ENCODE measurements at regions of chr19 and their contacts with region 1.

Region 1: DNA sequence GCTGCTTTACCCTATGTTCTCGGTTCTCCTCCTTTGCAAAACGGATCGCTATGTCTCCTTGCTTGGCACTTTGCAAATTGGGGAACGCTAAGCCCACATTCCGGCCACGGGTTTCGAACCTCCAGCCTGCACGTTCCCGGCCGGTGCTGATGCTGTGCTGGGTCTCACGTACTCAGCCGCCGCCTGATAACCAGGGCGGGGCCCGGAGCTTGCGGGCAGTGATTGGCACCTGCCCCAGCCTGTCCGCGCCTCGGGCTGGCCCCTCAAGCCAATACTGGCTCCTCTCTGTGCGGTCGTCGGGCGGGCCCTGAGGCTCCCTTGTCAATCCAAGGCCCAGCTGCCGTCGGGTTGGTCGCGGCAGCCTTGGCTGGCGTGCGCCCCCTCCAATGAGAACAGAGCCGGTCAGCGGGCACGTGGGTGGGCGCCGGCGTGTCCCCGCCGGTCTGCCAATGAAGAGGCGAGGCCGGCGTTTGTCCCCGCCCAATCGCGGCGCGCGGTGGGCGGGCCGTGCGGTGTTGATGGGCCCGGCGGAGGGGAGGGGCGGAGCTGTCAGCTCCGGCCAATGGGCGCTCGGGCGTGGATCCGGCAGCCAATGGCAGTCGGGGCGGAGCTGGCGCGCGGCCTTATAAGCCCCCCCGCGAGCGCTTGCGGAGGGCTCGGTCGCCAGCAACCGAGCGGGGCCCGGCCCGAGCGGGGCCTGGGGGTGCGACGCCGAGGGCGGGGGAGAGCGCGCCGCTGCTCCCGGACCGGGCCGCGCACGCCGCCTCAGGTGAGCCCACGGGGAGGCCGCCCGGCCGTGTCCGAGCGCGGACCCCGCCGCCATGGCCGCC is at the start of gene KDM4B:
- DNase-seq: peak; percentile 98
- H3K4me3 Mint-ChIP-seq: peak within 1 kb of the TSS; percentile 88
- H3K27ac Mint-ChIP-seq: peak within 1 kb of the TSS; percentile 75
- H3K4me1 Mint-ChIP-seq: peaks cover 30% of the 10 kb centered on the region
- H3K27me3 Mint-ChIP-seq: no peaks in the 10 kb centered on the region
- total RNA-seq, gene KDM4B: 10.5 to 12.7 TPM

Region 2: GRCh38 chr19:4576016-4576933 is 392.4 kb before region 1 on chr19:
- CTCF ChIA-PET with region 1: no interaction called
- intact Hi-C with region 1: no loop called
- DNase-seq: peak; percentile 87
- H3K4me3 Mint-ChIP-seq: no peak overlapping the region
- H3K27ac Mint-ChIP-seq: no peak overlapping the region
- H3K4me1 Mint-ChIP-seq: peaks cover 11% of the 10 kb centered on the region
- H3K27me3 Mint-ChIP-seq: peaks cover 40% of the 10 kb centered on the region

Region 3: DNA sequence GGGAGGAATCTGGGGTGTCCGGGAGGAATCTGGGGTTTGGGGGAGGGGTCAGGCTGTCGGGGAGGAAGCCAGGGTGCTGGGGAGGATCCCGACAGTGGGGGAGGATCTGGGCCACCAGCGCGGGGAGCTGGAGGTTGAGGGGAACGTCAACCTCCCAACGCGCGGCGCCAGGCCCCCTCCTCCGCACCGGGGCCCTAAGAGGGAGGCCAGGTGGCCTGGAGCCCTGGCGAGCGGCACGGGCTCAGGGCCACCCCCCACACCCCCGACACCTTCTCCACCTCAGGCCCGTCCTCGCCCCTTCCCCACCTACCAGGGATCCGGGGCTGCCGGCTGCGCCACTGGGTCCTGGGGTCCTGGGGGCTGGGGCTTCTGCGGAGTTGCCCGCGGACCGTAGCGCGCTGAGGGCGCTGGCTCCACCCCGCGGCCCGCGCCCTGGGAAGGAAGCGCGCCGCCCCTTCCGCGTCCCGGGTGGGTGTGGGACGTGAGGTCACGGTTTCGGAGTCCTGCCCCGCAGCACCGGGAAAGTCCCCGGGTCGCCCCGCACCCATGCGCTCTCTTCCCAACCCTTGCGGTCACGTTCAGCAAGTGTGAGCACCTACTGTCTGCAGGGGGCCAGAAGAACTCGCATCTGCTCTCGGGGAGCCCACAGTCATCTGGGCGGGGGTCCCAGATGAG is 137.2 kb before region 1 on chr19 and contains the start of gene TICAM1:
- CTCF ChIA-PET with region 1: no interaction called
- intact Hi-C with region 1: no loop called
- DNase-seq: peak; percentile 86
- H3K4me3 Mint-ChIP-seq: peak within 1 kb of the TSS; percentile 86
- H3K27ac Mint-ChIP-seq: peak within 1 kb of the TSS; percentile 85
- H3K4me1 Mint-ChIP-seq: peaks cover 20% of the 10 kb centered on the region
- H3K27me3 Mint-ChIP-seq: no peaks in the 10 kb centered on the region
- total RNA-seq, gene TICAM1: 15.2 to 16.5 TPM

Region 4: GRCh38 chr19:4867534-4868285 is 101.0 kb before region 1 on chr19 and contains the start of gene PLIN3:
- CTCF ChIA-PET with region 1: interaction called, 3 read pairs
- intact Hi-C with region 1: loop called (anchors 1 kb)
- DNase-seq: peak; percentile 97
- H3K4me3 Mint-ChIP-seq: peak within 1 kb of the TSS; percentile 74
- H3K27ac Mint-ChIP-seq: peak within 1 kb of the TSS; percentile 36
- H3K4me1 Mint-ChIP-seq: peaks cover 19% of the 10 kb centered on the region
- H3K27me3 Mint-ChIP-seq: peaks cover 3% of the 10 kb centered on the region
- total RNA-seq, gene PLIN3: 16.1 to 17.1 TPM

Region 5: GRCh38 chr19:4909897-4910593 is 58.6 kb before region 1 on chr19:
- CTCF ChIA-PET with region 1: interaction called, 6 read pairs
- intact Hi-C with region 1: loop called (anchors 1 kb)
- DNase-seq: peak; percentile 97
- H3K4me3 Mint-ChIP-seq: peak overlapping the region; percentile 85
- H3K27ac Mint-ChIP-seq: peak overlapping the region; percentile 86
- H3K4me1 Mint-ChIP-seq: peaks cover 53% of the 10 kb centered on the region
- H3K27me3 Mint-ChIP-seq: no peaks in the 10 kb centered on the region

Region 6: GRCh38 chr19:4993683-4994082 is 25.0 kb after region 1 on chr19:
- CTCF ChIA-PET with region 1: no interaction called
- intact Hi-C with region 1: no loop called
- DNase-seq: no peak
- H3K4me3 Mint-ChIP-seq: no peak overlapping the region
- H3K27ac Mint-ChIP-seq: no peak overlapping the region
- H3K4me1 Mint-ChIP-seq: peaks cover 3% of the 10 kb centered on the region
- H3K27me3 Mint-ChIP-seq: no peaks in the 10 kb centered on the region

Region 7: DNA sequence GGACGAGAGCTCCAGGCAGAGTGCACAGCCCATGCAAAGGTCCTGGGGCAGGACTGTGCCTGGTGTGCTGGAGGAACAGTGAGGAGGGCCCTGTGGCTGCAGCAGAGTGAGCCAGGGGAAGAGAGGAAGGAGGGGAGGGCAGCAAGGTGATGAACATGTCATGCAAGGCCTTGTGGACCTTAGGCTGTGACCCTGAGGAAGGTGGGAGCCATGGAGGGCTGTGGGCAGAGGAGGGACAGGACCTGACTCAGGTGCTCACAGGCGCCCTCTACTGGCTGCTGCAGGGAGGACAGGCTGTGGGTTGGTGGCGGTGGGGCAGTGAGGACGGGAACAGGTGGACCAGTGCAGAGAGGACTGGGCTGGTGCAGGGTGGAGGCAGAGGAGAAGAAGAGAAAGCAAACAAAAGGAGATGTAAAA is 201.7 kb after region 1 on chr19:
- CTCF ChIA-PET with region 1: no interaction called
- intact Hi-C with region 1: no loop called
- DNase-seq: peak; percentile 72
- H3K4me3 Mint-ChIP-seq: no peak overlapping the region
- H3K27ac Mint-ChIP-seq: no peak overlapping the region
- H3K4me1 Mint-ChIP-seq: no peaks in the 10 kb centered on the region
- H3K27me3 Mint-ChIP-seq: no peaks in the 10 kb centered on the region

Region 8: GRCh38 chr19:5680437-5681368 is 712.0 kb after region 1 on chr19 and contains the starts of genes HSD11B1L and MICOS13:
- CTCF ChIA-PET with region 1: no interaction called
- intact Hi-C with region 1: loop called (anchors 1 kb)
- DNase-seq: peak; percentile 99
- H3K4me3 Mint-ChIP-seq: peak within 1 kb of the TSS; percentile 98
- H3K27ac Mint-ChIP-seq: peak within 1 kb of the TSS; percentile 91
- H3K4me1 Mint-ChIP-seq: peaks cover 20% of the 10 kb centered on the region
- H3K27me3 Mint-ChIP-seq: no peaks in the 10 kb centered on the region
- total RNA-seq, gene HSD11B1L: 2.6 to 3.0 TPM
- total RNA-seq, gene MICOS13: 43.3 to 44.8 TPM

Measured in activated naive CD4-positive, alpha-beta T cell treated with anti-CD3 and anti-CD28 coated beads for 36 hours (primary cell).